CD8-positive, alpha-beta memory T cell (primary cell): ENCODE measurements at regions of chr6 and their contacts with region 1.

Region 1: GRCh38 chr6:127950566-127951145 is 49.8 kb upstream of the THEMIS start:
- DNase-seq: no peak
- H3K4me3 ChIP-seq: peak overlapping the region; percentile 58
- H3K4me3 Mint-ChIP-seq: peak overlapping the region; percentile 32 to 85 (median 80)
- H3K27ac ChIP-seq: no peak overlapping the region
- H3K27ac Mint-ChIP-seq: peak overlapping the region; percentile 60 to 92 (median 86)
- H3K4me1 ChIP-seq: peaks cover 57% of the 10 kb centered on the region
- H3K4me1 Mint-ChIP-seq: peaks cover 57 to 79% (median 76%) of the 10 kb centered on the region in 3 donors
- H3K27me3 ChIP-seq: no peaks in the 10 kb centered on the region
- H3K27me3 Mint-ChIP-seq: no peaks in the 10 kb centered on the region

Region 2: DNA sequence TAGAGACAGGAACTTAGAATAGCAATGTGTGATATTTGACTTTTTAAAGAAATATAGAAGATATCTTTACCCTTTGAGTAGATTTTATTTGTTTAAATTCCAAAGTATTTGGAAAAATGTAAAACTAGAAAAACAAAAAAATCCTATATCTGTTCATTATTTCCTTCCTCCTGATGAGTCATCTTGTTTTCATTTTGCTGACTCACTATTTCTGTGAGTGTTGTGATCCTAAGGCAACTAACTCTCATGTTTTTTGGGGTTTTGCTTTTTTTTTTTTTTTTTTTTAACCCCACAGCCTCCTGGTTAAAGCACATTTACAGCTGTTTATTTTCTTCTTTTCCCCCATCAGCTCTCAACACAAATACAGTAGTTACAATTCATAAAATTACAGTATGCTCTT is 12.0 kb before region 1 on chr6:
- CTCF ChIA-PET with region 1: interaction called, 5 read pairs
- POLR2A ChIA-PET with region 1: interaction called, 10 read pairs
- DNase-seq: peak in 1 of 5 donors; percentile 20
- H3K4me3 ChIP-seq: no peak overlapping the region
- H3K4me3 Mint-ChIP-seq: peak overlapping the region in 4 of 7 donors; percentile 16 to 58 (median 32)
- H3K27ac ChIP-seq: peak overlapping the region; percentile 18
- H3K27ac Mint-ChIP-seq: peak overlapping the region in 7 of 8 donors; percentile 10 to 87 (median 27)
- H3K4me1 ChIP-seq: peaks cover 33% of the 10 kb centered on the region
- H3K4me1 Mint-ChIP-seq: peaks cover 50 to 66% (median 55%) of the 10 kb centered on the region in 3 donors
- H3K27me3 ChIP-seq: no peaks in the 10 kb centered on the region
- H3K27me3 Mint-ChIP-seq: no peaks in the 10 kb centered on the region